Kidney (tissue), 22 donors: ENCODE measurements at regions of chr4 and their contacts with region 1.

Region 1: DNA sequence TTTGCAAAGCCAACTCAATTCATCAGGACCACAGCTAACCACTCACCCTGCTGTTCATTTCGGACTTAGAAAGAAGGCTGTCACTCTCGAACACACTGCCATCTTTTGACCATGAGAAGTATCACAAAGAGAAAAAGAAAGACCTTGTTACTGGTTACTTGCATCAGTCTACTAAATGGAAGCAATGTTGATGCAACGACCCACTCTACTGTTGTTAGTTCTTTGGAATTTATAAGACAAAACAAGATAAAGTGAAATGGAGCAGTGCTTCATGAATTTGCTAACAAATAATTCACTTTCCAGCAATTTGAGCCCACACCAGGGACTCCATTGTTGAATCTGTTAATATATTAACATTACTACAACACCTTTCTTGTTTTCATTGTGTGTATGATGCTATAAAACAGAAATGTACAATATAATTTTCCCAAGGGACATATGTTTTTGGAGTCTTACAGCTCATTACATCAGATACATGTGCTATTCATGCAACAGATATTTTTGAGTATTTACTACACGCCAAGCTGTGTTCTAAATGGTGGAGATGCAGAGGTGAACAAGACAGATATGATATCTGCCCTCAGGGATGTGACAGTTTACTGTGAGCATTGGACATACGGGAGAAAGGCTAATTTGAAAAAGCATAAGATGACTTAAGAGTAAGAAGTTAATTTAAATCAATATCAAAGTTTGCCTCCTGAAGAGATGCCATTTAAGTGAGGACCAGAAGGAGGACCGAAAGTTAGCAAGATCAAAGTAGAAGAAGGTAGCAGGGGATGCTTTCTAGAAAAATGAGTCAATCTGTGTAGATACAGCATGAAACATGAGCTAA is 87.2 kb downstream of the AREG start:
- DNase-seq: peak in 3 of 5 donors; percentile 14 to 80 (median 66)
- H3K4me3 ChIP-seq: no peak overlapping the region
- H3K27ac ChIP-seq: no peak overlapping the region
- H3K4me1 ChIP-seq: no peaks in the 10 kb centered on the region
- H3K27me3 ChIP-seq: no peaks in the 10 kb centered on the region
- CTCF ChIP-seq: peak; percentile 53

Region 2: GRCh38 chr4:74397748-74398426 is 134.3 kb before region 1 on chr4:
- intact Hi-C with region 1: loop called (anchors 10 kb)
- DNase-seq: no peak
- H3K4me3 ChIP-seq: peak overlapping the region in 2 of 3 donors; percentile 21 to 26
- H3K27ac ChIP-seq: no peak overlapping the region
- H3K4me1 ChIP-seq: no peaks in the 10 kb centered on the region
- H3K27me3 ChIP-seq: no peaks in the 10 kb centered on the region
- CTCF ChIP-seq: no peak